ENCODE measurements at regions of chr3 and their contacts with region 1.

Region 1: DNA sequence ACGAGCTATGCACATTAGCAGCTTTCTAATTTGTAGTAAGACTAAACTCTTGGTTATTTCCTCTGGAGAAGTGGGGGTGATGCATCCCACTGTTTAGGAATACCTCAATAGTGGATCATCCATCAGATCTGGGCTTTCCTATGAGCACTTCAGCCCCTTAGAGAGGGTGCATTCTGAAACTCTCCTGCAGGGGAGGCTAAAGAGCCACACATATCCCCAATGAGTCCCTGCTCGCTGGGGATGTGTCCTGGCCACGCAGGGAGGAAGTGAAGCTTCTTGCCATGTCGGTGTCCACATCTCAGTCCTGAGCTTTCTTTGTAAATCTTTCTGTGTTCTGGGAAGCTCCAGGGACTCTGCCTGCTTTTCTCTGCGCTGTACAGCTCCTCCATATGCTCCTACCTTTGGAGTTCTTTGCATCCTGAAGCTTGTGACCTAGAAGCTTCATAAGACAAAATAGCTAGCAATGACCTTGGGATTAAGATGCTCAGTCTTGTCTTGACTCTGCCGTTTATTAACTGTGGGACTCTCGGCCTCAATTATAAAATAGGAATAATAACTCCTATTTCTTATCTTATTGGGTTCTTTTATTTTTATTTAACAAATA is 28.3 kb upstream of the MASP1 start:
- DNase-seq: peak; percentile 76
- H3K4me3 ChIP-seq: no peak overlapping the region
- H3K27ac ChIP-seq: no peak overlapping the region
- H3K4me1 ChIP-seq: peaks cover 0 to 13% (median 9%) of the 10 kb centered on the region in 4 donors
- H3K27me3 ChIP-seq: peaks cover 11% of the 10 kb centered on the region
- CTCF ChIP-seq: peak; percentile 80 to 94 (median 90)
- EP300 ChIP-seq: no peak
- POLR2A ChIP-seq: no peak

Region 2: GRCh38 chr3:187679638-187680396 is 360.0 kb after region 1 on chr3:
- in situ Hi-C with region 1: loop called (anchors 5 kb)
- intact Hi-C with region 1: loop called (anchors 1 kb)
- DNase-seq: peak; percentile 79
- H3K4me3 ChIP-seq: no peak overlapping the region
- H3K27ac ChIP-seq: no peak overlapping the region
- H3K4me1 ChIP-seq: peaks cover 0 to 4% (median 0%) of the 10 kb centered on the region in 4 donors
- H3K27me3 ChIP-seq: peaks cover 11% of the 10 kb centered on the region
- CTCF ChIP-seq: peak; percentile 90 to 94 (median 92)
- EP300 ChIP-seq: no peak
- POLR2A ChIP-seq: no peak

Measured in transverse colon (tissue), 4 donors.